K562 (cell line): ENCODE measurements at regions of chr2 and their contacts with region 1.

Region 1: DNA sequence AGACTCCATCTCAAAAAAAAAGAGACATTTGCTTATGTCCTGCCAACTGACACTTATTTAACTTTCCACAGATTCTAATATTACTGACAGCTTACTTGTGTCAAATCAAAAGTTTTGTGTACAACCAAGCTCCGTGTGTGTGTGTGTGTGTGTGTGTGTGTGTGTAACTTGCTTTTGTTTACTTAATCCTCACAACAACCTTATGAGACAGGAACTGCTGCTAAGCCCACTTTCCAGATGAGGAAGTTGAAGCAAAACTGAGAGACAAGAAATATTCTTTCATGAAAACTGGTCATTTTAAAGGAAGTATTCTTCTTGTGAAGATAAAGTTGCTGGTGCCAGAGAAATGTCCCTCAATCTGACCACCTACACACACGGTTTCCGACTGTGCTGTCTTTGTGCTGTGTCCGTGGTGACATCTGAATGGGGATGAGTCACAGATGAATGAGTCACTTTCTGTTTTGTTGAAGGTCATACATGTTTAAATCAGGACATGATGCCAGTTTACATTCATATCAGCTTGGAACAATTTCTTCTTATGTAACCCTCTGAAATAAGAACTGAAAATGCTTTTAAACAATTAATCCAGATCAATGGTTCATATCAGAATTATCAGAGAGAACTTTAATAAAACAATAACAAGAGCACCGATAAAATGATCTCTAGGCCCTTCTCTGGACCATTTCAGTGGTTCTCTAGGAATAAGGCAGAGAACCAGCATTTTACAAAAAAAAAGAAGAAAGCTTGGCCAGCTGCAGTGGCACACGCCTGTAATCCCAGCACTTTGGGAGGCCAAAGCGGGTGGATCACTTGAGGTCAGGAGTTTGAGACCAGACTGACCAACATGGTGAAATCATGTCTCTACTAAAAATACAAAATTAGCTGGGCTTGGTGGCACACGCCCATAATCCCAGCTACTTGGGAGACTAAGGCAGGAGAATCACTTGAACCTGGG is 95.5 kb downstream of the THNSL2 start:
- DNase-seq: peak; percentile 36 to 55 (median 43)
- ATAC-seq: peak; percentile 59
- H3K4me3 ChIP-seq: no peak overlapping the region
- H3K27ac ChIP-seq: no peak overlapping the region
- H3K4me1 ChIP-seq: peaks cover 0 to 4% of the 10 kb centered on the region in 2 experiments; a peak in 2 of 5 replicates
- H3K27me3 ChIP-seq: peaks cover 12 to 30% of the 10 kb centered on the region in 2 experiments
- CTCF ChIP-seq: no peak
- EP300 ChIP-seq: no peak
- POLR2A ChIP-seq: no peak
- RAD21 ChIP-seq: no peak

Region 2: DNA sequence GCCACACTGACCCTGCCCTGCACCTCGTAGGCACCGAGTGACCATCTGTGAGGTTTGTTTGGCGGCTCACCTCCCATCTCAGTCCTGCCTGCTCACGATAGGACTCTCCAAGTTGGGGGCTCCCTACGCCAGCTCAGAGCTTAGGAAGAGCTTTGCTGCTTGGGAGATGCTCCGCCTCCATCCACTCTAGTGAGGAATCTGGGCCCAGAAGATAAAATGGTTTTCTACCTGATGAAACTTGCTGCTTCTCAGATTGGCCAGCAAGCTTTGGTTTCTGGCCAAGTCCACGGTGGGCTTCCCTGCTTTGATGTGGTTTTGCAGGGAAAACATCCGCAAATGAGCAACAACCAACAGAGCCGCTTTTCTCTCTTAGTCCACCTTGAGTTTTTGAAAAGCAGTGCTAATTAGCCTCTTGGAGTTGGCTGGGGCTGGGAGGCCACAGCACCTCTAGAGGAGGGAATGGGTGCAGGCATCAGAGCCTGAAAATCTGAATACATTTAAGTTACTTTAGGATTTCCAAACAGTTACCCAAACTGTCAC is 53.3 kb before region 1 on chr2:
- CTCF ChIA-PET with region 1: no interaction called
- POLR2A ChIA-PET with region 1: interaction called, 4 read pairs
- in situ Hi-C with region 1: no loop called
- intact Hi-C with region 1: loop called (anchors 10 kb)
- DNase-seq: peak in 3 of 4 experiments; percentile 20 to 23 (median 21)
- ATAC-seq: peak; percentile 92
- H3K4me3 ChIP-seq: no peak overlapping the region
- H3K27ac ChIP-seq: no peak overlapping the region
- H3K4me1 ChIP-seq: no peaks in the 10 kb centered on the region
- H3K27me3 ChIP-seq: peaks cover 19 to 29% of the 10 kb centered on the region in 2 experiments; a peak in 4 of 5 replicates
- CTCF ChIP-seq: peak; percentile 56 to 62 (median 61)
- EP300 ChIP-seq: no peak
- POLR2A ChIP-seq: no peak
- RAD21 ChIP-seq: 0 out of 4 replicates have a peak, but pooled peaks of 1 of the 2 experiments have one; percentile 14

Region 3: GRCh38 chr2:88281302-88282217 is 15.9 kb after region 1 on chr2:
- CTCF ChIA-PET with region 1: no interaction called
- POLR2A ChIA-PET with region 1: no interaction called
- in situ Hi-C with region 1: no loop called
- intact Hi-C with region 1: no loop called
- DNase-seq: no peak
- ATAC-seq: no peak
- H3K4me3 ChIP-seq: no peak overlapping the region
- H3K27ac ChIP-seq: no peak overlapping the region
- H3K4me1 ChIP-seq: peaks cover 0 to 7% of the 10 kb centered on the region in 2 experiments; a peak in 1 of 5 replicates
- H3K27me3 ChIP-seq: peaks cover 29 to 43% of the 10 kb centered on the region in 2 experiments
- CTCF ChIP-seq: no peak
- EP300 ChIP-seq: no peak
- POLR2A ChIP-seq: no peak
- RAD21 ChIP-seq: no peak